ENCODE measurements at regions of chr13 and their contacts with region 1.

Region 1: GRCh38 chr13:80469853-80470381 is 129.0 kb upstream of the SPRY2 start:
- DNase-seq: peak; percentile 83

Region 2: DNA sequence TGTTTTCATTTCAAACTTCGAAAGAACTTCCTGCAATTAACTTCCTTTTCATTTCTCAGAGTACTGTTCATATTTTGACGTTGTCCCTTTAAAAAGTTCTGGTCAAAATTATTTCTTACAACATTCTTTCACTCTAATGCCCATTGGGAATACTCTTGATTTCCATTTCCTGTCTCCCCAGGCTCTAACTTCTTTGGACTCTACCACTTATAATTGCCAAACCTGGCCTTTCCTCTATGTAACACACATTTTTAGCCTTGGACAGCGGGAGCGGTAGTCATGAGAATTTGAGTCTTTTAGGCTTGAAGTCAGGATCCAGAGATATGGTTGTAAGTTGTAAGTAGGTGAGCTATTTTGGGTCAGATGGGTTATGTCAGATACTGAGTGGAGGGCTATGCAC is 34.5 kb after region 1 on chr13:
- intact Hi-C with region 1: no loop called
- DNase-seq: no peak

Region 3: DNA sequence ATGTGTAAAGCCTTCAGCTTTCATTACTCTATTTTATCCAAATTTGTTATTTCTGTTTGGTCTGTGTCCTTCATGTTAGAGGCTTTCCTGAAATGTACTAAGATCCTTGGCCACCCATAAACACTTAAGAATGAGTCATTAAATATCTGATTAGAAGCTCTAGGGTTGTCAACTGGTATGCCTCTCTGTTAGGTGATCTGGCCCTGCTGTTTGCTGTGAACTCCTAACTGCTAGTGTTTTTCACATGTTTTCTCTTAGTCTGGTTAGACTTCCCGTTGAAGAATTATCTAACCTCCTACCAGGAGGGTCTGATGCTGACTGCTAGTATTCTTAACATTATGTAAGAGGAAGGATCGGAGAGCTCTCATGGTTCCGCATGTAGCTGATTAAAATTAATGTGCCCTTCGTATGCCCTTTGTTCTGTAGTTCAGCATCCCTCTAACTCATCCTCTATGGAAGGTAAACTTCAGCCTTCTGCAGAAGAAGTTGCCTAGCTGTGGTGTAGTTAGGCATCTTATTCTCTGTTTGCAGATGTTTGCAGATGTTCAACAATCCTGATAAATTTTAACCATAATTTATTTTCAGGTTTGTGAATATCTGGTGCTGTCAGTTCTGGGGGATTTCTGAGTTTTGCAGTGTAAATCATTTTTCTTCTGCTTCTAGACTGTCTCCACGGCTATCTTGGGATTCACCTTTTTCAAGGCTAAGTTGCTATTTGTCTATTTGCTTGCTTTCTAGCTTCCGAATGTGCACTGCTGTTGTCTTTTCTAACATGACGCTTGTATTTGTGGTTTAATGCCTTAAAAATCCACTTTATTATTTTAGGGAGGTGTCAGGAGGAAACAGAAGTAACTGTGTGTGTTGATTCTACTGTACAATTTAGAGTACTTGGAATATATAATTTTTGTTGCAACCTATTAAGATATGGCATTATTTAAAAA is 78.2 kb after region 1 on chr13:
- intact Hi-C with region 1: loop called (anchors 5 kb)
- DNase-seq: no peak

Region 4: GRCh38 chr13:80923907-80924306 is 454.0 kb after region 1 on chr13:
- intact Hi-C with region 1: loop called (anchors 10 kb)
- DNase-seq: no peak